ENCODE measurements at regions of chr2 and their contacts with region 1.

Region 1: DNA sequence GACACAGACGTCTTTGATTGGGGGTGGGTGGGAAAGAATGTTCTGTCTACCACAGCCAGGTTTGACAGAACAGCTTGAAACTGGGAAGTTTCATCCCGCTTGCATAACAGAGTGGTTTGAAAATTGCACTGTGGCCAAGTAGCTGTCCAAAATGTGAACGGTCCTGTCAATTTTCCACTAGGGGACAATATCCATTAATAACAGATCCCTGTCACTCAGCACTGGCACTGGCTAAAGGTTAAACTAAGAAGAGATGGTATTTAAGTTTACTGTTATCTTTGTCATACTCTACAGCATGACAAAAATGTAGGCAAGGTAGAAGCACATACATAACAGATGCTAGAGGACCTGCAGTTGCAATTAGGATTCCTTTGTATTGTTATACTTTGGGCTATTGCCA is 55.6 kb upstream of the ACMSD start:
- DNase-seq: no peak
- H3K4me3 ChIP-seq: no peak overlapping the region
- H3K27ac ChIP-seq: no peak overlapping the region
- H3K27me3 ChIP-seq: peaks cover 2% of the 10 kb centered on the region
- CTCF ChIP-seq: peak; percentile 38

Region 2: DNA sequence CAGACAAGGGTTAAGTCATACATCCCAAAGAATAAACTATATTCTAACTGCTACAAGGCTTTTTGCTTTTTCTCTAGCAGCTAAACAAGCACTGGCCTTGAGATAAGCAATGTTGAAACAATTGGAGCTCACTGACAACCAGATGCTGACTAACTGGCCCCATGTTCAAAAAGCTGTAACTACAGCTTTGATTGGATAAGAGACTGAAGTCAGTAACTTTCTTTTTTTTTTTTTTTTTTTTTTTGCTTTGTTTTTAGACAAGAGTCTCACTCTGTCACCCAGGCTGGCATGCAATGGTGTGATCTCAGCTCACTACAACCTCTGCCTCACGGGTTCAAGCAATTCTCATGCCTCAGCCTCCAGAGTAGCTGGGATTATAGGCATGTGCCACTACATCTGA is 18.6 kb before region 1 on chr2:
- CTCF ChIA-PET with region 1: no interaction called
- POLR2A ChIA-PET with region 1: interaction called, 14 read pairs
- DNase-seq: no peak
- H3K4me3 ChIP-seq: no peak overlapping the region
- H3K27ac ChIP-seq: no peak overlapping the region
- H3K27me3 ChIP-seq: no peaks in the 10 kb centered on the region
- CTCF ChIP-seq: no peak

Region 3: GRCh38 chr2:134852518-134852917 is 69.7 kb after region 1 on chr2:
- CTCF ChIA-PET with region 1: interaction called, 12 read pairs
- POLR2A ChIA-PET with region 1: no interaction called
- DNase-seq: no peak
- H3K4me3 ChIP-seq: no peak overlapping the region
- H3K27ac ChIP-seq: no peak overlapping the region
- H3K27me3 ChIP-seq: peaks cover 3% of the 10 kb centered on the region
- CTCF ChIP-seq: no peak

Region 4: GRCh38 chr2:134897932-134898331 is 115.1 kb after region 1 on chr2:
- CTCF ChIA-PET with region 1: interaction called, 11 read pairs
- POLR2A ChIA-PET with region 1: no interaction called
- DNase-seq: no peak
- H3K4me3 ChIP-seq: no peak overlapping the region
- H3K27ac ChIP-seq: no peak overlapping the region
- H3K27me3 ChIP-seq: no peaks in the 10 kb centered on the region
- CTCF ChIP-seq: peak; percentile 43